ENCODE measurements at regions of chr2 and their contacts with region 1.

Region 1: DNA sequence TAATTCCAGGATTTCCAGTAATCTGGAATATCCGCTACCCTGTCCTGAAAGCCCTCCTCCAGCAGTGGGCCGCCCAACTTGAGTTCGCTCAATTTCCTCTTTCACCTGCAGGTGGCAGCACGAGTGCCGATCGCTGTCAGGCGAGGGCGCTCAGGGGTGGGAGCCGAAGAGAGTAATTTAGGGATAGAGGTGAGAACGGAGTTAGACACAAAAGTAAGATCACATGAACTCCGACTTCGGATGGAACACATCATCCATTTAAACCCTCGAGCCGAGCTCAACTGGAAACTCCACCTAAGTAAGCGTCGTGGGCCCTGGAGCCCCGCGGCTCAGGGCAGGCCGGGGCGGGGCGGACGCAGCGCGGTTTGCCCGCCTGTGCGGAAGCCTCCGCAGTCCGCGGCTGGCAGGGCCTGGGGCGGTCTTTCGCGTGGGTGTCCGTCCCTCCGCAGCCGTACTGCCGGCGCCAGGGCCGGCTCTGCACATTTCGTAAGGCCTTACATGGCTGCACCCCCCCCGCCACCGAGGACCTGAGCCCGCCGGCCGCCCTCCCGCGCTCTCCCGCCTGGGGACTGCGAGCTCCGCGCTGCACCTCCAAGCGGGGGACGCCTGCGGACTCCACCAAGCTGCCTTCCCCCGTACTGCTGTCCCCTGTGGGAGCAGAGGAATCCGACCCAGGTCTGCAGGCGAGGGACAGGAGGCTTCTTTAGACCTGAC is 61.2 kb downstream of the SEMA4F start:
- DNase-seq: peak; percentile 64
- H3K4me3 ChIP-seq: no peak overlapping the region
- H3K27ac ChIP-seq: no peak overlapping the region
- H3K4me1 ChIP-seq: no peaks in the 10 kb centered on the region
- CTCF ChIP-seq: peak; percentile 97

Region 2: DNA sequence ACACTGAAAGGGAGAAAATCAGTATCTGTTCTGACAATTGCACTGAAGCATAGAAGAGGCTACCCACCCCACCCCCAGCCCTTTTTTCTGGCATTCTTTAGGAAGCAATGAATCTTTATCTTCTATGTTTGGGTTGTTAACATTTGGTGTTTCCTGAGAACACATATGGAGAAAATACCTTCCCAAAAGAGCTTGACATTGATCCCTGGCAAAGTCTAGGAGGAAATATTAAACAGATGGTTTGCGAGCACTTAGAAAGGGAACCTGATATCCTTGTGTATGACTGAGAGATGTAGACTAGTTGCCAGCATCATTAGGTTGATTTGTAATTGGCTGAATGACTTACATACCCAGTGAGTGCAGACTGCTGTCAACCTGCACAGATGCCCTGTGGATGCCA is 117.8 kb before region 1 on chr2:
- CTCF ChIA-PET with region 1: no interaction called
- POLR2A ChIA-PET with region 1: no interaction called
- intact Hi-C with region 1: no loop called
- DNase-seq: no peak
- H3K4me3 ChIP-seq: no peak overlapping the region
- H3K27ac ChIP-seq: no peak overlapping the region
- H3K4me1 ChIP-seq: no peaks in the 10 kb centered on the region
- CTCF ChIP-seq: no peak

Region 3: DNA sequence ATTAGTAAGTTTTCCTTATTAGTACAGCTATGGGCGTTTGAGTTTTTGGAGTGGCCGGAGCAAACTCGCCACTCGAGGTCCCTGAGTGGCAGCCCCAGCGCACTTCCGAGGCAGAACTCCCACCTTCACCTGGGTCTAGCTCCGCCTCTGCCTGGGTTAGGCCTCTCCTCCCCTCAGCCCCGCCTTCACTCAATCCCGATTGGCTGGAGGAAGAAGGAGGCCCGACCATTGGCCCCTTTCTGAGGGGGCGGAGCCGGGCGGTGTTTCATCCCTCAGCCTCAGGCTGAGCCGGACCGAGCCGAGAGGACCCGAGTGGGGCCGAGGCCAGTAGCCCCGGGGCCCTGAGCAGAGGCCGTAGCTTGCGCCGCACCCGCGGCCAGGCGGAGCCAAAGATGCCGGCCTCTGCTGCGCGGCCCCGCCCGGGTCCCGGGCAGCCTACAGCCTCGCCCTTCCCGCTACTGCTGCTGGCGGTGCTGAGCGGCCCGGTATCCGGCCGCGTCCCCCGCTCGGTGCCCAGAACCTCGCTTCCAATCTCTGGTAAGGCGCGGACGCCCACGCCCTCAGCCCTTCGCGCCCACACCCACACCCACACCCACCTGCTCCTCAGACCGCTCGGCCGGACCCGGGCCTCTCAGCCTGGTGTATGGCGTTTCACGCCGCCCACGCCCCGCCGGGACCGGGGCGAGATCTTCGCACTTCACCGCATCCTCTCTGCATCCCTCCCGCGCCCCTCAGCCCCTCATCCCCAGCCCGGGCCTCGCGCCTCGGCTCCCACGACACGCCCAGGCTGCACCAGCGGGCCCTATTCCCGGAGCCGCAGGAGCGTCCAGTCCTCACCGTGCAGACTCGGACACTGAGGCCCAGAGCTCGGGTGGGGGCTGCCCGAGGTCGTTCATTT is 61.0 kb before region 1 on chr2 and contains the start of gene SEMA4F:
- CTCF ChIA-PET with region 1: no interaction called
- POLR2A ChIA-PET with region 1: no interaction called
- intact Hi-C with region 1: no loop called
- DNase-seq: peak; percentile 94
- H3K4me3 ChIP-seq: peak within 1 kb of the TSS; percentile 72
- H3K27ac ChIP-seq: no peak within 1 kb of the TSS
- H3K4me1 ChIP-seq: peaks cover 5% of the 10 kb centered on the region
- CTCF ChIP-seq: no peak
- total RNA-seq, gene SEMA4F: 2.3 and 3.4 TPM in 2 replicates

Region 4: DNA sequence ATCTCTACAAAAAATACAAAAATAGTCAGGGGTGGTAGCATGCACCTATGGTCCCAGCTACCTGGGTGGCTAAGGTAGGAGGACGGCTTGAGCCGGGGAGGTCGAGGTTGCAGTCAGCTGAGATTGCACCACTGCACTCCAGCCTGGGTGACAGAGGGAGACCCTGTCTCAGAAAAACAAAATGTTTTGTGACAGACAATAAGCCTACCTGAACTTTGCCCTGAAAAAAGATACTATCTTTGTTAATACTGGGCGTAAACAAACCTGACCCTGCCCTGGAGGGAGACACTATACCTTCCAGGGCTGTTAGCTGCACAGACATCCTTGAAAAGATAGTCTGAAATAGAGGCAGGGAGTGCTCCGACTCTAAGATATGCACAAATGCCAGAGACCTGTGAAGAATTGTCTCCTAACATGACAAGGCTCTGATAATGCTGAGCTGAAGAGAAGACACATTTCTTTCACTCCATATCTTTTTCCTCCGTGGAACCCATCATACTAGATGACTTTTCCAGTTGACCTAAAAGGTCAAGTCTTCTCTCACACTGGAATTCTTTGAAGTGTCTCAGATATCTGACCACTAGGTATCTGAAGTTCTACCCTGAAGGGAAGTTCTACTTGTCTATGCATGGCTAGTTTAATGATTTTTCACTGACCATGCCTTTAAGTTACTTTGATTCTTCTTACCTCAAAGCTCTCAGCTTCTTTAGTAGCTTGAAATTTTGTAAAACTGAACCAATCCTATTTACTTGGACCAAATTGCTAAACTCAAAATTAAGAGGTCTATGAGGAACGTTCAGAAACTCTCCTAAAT is 97.8 kb after region 1 on chr2:
- CTCF ChIA-PET with region 1: no interaction called
- POLR2A ChIA-PET with region 1: no interaction called
- intact Hi-C with region 1: loop called (anchors 5 kb)
- DNase-seq: no peak
- H3K4me3 ChIP-seq: no peak overlapping the region
- H3K27ac ChIP-seq: no peak overlapping the region
- H3K4me1 ChIP-seq: no peaks in the 10 kb centered on the region
- CTCF ChIP-seq: no peak

Region 5: DNA sequence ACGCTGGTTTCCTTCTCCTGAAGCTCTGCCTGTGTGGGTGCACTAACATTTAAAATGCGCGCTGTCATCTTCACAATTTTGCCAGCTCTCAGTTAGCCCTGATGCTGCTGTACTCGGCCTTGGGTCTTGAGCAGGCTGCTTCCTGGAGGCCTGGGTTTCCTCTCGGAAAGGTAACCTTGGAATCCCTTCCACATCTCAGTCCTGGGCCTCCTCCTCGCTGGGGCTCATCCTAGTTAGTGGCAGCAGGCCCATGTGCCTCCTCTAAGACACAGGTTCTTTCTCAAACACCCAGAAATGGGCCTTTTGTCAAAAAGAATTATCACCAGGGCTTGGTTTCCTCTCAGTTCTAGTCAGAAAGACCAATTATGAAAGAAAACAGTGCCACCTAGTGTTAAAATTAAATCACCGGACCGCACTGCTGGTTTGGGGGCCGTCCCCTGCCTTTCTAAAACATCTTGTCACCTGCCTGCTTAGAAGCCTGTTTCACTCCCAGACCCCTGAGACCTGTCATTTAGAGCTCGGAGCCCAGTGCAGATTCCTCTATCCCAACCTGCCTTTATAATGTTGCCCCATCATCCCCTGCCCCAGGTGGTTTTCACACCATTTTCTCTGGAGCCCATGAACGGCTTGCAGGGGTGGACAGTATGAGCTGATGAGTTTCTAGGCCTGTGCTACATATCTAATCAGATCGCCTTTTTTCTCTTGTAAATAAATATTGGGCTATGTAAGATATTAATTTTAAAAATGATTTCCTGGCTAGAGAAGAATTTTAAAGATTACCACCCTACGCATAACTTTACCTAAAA is 161.0 kb after region 1 on chr2:
- CTCF ChIA-PET with region 1: interaction called, 6 read pairs
- POLR2A ChIA-PET with region 1: interaction called, 4 read pairs
- intact Hi-C with region 1: loop called (anchors 1 kb)
- DNase-seq: peak; percentile 67
- H3K4me3 ChIP-seq: no peak overlapping the region
- H3K27ac ChIP-seq: no peak overlapping the region
- H3K4me1 ChIP-seq: no peaks in the 10 kb centered on the region
- CTCF ChIP-seq: peak; percentile 89